OCI-LY7 (cell line): ENCODE measurements at regions of chr9 and their contacts with region 1.

Region 1: GRCh38 chr9:38371495-38371894 is 21.0 kb upstream of the ALDH1B1 start:
- DNase-seq: peak; percentile 21
- H3K4me3 ChIP-seq: no peak overlapping the region
- H3K27ac ChIP-seq: no peak overlapping the region
- H3K4me1 ChIP-seq: no peaks in the 10 kb centered on the region
- CTCF ChIP-seq: peak; percentile 47; the same call in 1 of the 2 replicates

Region 2: DNA sequence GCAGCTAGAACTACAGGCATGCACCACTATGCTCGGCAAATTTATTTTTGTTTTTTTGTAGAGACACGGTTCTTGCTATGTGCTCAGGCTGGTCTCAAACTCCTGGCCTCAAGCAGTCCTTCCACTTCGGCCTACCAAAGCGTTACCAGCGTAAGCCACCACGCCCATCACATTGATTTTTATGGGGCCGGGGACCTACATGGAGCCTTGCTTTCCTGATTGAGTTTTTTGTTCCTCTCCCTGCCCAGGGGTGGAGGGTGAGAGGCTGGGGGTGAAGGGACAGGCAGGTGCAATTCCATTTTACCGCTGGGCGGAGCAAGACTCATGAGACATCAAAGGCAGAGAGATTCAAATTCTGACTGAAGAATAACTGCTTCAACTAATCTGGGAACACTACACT is 22.9 kb after region 1 on chr9:
- CTCF ChIA-PET with region 1: no interaction called
- POLR2A ChIA-PET with region 1: interaction called, 3 read pairs
- intact Hi-C with region 1: loop called (anchors 1 kb)
- DNase-seq: no peak
- H3K4me3 ChIP-seq: no peak overlapping the region
- H3K27ac ChIP-seq: no peak overlapping the region
- H3K4me1 ChIP-seq: no peaks in the 10 kb centered on the region
- CTCF ChIP-seq: no peak